ENCODE measurements at regions of chr22 and their contacts with region 1.

Region 1: DNA sequence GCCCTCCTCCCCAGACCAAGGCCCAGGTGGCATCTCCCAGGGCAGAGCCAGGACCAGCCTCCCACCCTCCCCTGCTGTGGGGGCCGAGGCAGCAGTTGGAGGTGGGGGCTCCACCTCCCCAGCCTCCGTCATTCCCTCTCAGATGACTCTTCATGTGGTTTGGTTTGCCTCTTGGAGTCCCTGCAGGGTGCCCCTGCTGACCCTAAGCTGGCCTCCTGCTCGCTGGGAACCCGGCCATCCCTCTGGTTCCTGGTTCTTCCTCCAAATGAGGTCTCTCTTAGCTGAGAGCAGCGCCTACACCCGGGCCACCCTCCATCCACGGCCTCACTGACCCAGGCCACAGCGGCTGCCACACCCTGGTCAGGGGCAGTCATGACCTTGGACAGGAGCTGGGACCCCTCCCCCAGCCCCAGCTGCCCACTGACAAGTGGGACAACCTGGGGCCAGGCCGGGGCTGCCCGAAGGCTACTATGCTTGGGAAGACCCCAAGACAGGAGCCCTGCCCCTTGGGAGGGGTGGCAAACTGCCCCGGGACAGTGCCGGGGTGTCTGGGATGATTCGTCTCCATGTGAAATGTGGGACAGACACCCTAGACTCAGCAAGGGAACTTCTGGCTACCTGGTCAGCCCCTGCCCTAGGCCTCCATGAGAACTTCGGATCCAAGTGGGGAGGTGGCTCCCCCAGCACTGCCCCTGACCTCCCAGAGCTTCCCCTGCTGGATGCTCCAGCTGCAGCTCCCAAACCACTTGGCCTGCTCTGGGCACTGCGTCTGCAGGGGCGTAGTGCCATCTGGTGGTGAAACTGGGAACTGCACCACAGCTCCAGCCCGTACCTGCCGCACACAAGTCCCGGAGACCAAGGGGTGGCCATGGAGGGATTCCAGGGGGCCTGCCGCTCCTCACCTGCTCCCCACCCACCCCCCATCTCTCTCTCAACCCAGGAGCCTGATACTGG is 194.5 kb downstream of the IGLL1 start:
- DNase-seq: peak; percentile 88
- H3K4me3 ChIP-seq: no peak overlapping the region
- H3K27ac ChIP-seq: no peak overlapping the region
- H3K4me1 ChIP-seq: peaks cover 0 to 9% (median 0%) of the 10 kb centered on the region in 4 donors
- H3K27me3 ChIP-seq: no peaks in the 10 kb centered on the region
- CTCF ChIP-seq: peak; percentile 99 to 100 (median 99)
- EP300 ChIP-seq: no peak
- POLR2A ChIP-seq: no peak

Region 2: DNA sequence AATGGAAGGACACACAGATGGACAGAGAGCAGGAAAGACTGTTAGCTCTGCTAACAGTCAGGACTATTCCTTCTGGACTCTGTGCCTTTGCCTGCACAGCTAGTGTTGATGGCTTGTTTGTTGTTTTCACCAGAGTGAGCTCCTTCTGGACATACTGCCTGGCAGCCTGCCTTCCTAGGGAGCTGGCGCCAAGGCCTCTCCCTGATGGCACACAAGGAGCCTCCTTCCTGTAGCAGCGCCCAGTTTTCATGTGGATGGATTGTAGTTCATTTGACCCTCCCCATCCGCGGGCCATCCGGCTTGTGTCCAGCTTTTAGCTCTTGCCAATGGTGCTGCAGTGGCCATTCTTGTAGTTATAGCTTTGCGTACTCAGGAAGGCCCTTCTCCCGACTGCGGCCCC is 221.9 kb before region 1 on chr22:
- in situ Hi-C with region 1: loop called in 1 of 4 experiments (anchors 25 kb)
- intact Hi-C with region 1: no loop called
- DNase-seq: peak; percentile 64
- H3K4me3 ChIP-seq: no peak overlapping the region
- H3K27ac ChIP-seq: peak overlapping the region in 3 of 4 donors; percentile 10 to 43 (median 11)
- H3K4me1 ChIP-seq: peaks cover 3 to 16% (median 6%) of the 10 kb centered on the region in 4 donors
- H3K27me3 ChIP-seq: no peaks in the 10 kb centered on the region
- CTCF ChIP-seq: no peak
- EP300 ChIP-seq: no peak
- POLR2A ChIP-seq: no peak

Region 3: GRCh38 chr22:23315341-23315917 is 70.1 kb before region 1 on chr22:
- in situ Hi-C with region 1: no loop called
- intact Hi-C with region 1: loop called (anchors 5 kb)
- DNase-seq: peak; percentile 78
- H3K4me3 ChIP-seq: no peak overlapping the region
- H3K27ac ChIP-seq: no peak overlapping the region
- H3K4me1 ChIP-seq: no peaks in the 10 kb centered on the region
- H3K27me3 ChIP-seq: no peaks in the 10 kb centered on the region
- CTCF ChIP-seq: peak; percentile 56 to 78 (median 75)
- EP300 ChIP-seq: no peak
- POLR2A ChIP-seq: no peak